Activated CD4-positive, alpha-beta memory T cell treated with anti-CD3 and anti-CD28 coated beads for 36 hours (primary cell): ENCODE measurements at regions of chr13 and their contacts with region 1.

Region 1: DNA sequence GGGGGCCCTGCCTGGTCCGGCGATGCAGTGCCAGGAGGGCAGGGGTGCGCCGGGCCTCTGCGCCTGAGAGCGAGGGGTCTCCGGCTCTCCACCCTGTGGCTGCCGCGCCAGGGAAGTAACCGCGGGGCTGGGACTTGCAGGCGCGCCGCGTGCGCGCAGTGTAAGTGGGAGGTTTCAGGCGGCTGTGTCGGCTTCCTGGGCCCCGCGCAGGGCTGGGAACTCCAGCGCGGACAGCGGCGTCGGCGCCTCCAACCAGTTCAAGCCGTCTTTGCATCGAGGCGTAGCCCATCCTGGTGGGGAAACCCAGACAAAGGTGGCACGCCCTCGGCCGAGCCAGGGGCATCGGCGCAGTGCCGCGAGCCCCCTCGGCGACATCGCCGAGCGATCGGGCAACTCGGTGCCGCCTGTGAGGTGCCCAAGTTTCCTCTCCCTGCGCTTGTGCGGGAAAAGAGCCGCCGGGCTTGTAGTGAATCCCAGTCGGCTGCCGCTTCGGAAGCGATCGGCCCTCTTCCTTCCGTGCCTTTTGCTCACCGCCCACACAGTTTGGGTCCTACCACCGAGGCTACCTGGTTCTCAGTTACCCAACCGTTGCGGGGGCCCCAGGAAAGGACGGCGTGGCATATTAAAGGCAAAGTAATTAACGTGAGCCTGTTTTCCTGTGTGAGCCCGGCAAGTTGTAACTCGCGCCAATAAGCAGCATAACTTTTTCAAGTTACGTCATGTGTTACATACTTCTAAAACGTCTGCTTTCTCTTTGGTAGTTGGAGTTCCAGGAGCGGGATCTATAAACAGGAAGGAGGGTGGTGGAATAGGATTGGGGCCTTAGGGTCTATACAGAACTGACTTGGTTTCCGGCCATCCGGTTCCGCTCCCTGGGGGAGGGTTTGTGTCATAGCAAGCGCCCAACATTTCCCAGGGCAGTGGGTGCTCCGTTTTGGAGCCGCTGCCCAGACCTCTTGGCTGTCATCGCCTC is 1.2 kb downstream of the LRCH1 start:
- DNase-seq: peak; percentile 82
- H3K4me3 Mint-ChIP-seq: peak overlapping the region; percentile 90
- H3K27ac Mint-ChIP-seq: peak overlapping the region; percentile 87
- H3K4me1 Mint-ChIP-seq: peaks cover 39% of the 10 kb centered on the region
- H3K27me3 Mint-ChIP-seq: no peaks in the 10 kb centered on the region

Region 2: DNA sequence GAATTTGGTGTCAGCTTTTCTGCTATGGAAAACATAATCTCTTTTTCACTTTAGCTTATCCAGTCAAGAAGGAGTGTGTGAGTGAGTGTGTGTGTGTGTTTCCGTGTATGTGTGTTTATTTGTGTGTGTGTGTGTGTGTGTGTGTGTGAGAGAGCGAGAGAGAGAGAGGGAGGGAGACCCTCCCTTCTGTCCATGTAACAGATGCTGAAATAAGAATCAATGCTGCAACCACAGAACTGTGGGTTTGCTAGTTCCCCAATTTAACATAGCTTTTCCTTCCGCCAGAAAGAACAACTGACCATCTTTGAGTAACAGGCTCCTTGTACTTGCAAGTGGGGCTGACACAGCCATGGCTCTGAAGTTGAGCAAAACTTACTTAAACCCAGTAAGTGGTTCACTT is 377.4 kb before region 1 on chr13:
- CTCF ChIA-PET with region 1: no interaction called
- POLR2A ChIA-PET with region 1: no interaction called
- intact Hi-C with region 1: loop called (anchors 5 kb)
- DNase-seq: no peak
- H3K4me3 Mint-ChIP-seq: peak overlapping the region; percentile 97
- H3K27ac Mint-ChIP-seq: peak overlapping the region; percentile 96
- H3K4me1 Mint-ChIP-seq: peaks cover 66% of the 10 kb centered on the region
- H3K27me3 Mint-ChIP-seq: no peaks in the 10 kb centered on the region

Region 3: GRCh38 chr13:46535829-46536228 is 18.3 kb before region 1 on chr13:
- CTCF ChIA-PET with region 1: interaction called, 21 read pairs
- POLR2A ChIA-PET with region 1: no interaction called
- intact Hi-C with region 1: no loop called
- DNase-seq: no peak
- H3K4me3 Mint-ChIP-seq: no peak overlapping the region
- H3K27ac Mint-ChIP-seq: no peak overlapping the region
- H3K4me1 Mint-ChIP-seq: peaks cover 1% of the 10 kb centered on the region
- H3K27me3 Mint-ChIP-seq: peaks cover 2% of the 10 kb centered on the region

Region 4: GRCh38 chr13:46577696-46578589 is 23.8 kb after region 1 on chr13:
- CTCF ChIA-PET with region 1: interaction called, 13 read pairs
- POLR2A ChIA-PET with region 1: interaction called, 3 read pairs
- intact Hi-C with region 1: loop called (anchors 1 kb)
- DNase-seq: no peak
- H3K4me3 Mint-ChIP-seq: no peak overlapping the region
- H3K27ac Mint-ChIP-seq: peak overlapping the region; percentile 35
- H3K4me1 Mint-ChIP-seq: peaks cover 62% of the 10 kb centered on the region
- H3K27me3 Mint-ChIP-seq: no peaks in the 10 kb centered on the region

Region 5: DNA sequence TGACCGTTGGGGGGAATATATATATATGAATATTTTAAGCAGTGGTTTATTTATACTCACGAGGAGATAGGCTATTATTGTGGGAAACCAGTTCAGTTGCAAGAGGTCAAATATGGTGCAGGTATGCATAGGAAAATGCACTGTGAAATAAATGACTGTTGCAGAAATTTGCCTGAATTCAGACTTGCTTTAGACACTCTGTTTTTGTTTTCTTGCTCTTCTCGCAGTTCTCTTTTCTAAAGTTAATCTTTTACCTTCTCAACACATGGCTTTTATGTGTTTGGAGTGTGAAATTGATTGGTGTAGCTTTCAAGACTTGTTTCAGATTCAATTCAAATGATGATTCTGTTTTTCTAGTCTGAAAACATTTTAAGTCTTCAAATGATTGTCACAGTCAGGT is 108.5 kb after region 1 on chr13:
- CTCF ChIA-PET with region 1: interaction called, 14 read pairs
- POLR2A ChIA-PET with region 1: no interaction called
- intact Hi-C with region 1: no loop called
- DNase-seq: no peak
- H3K4me3 Mint-ChIP-seq: no peak overlapping the region
- H3K27ac Mint-ChIP-seq: no peak overlapping the region
- H3K4me1 Mint-ChIP-seq: peaks cover 32% of the 10 kb centered on the region
- H3K27me3 Mint-ChIP-seq: no peaks in the 10 kb centered on the region

Region 6: GRCh38 chr13:46687810-46688209 is 133.6 kb after region 1 on chr13:
- CTCF ChIA-PET with region 1: interaction called, 13 read pairs
- POLR2A ChIA-PET with region 1: no interaction called
- intact Hi-C with region 1: no loop called
- DNase-seq: peak; percentile 19
- H3K4me3 Mint-ChIP-seq: no peak overlapping the region
- H3K27ac Mint-ChIP-seq: no peak overlapping the region
- H3K4me1 Mint-ChIP-seq: peaks cover 16% of the 10 kb centered on the region
- H3K27me3 Mint-ChIP-seq: no peaks in the 10 kb centered on the region

Region 7: DNA sequence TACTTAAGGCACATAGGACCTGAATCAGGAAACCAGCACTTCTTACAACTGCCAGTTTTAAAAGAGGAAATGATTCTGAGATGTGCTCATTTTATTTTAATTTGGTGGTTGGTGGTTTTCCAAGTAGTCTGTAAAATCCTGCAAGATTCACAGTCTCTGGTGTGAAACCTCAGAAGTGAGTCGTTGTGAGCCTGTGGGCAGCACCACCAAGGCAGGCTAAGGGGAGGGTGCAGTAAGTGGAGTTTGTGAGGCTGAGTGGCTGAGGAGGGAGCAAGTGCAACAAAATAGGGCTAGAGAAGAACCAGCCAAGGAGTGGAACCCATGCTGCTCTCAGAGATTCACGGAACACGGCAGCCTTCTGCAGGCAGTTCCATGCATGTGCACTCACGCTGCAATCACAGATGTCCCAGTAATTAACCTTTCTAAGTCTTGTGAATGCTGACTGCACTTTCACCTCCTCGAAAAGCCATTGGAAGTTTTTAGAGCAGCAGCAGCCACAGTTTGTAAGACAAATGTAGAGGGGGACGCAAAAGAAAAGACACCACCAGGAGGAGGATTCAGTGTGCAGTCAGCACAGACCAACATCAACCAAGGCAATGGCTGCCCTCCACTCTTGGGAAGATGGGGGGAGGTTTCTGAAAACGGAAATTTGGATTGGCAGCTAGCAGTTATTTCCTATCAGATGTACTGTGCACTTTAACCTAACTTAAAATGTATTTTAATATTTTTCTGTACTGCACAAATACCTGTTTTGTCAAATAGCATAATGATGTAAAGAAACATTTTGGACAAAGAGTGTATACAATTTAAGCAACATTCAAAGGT is 197.9 kb after region 1 on chr13:
- CTCF ChIA-PET with region 1: interaction called, 14 read pairs
- POLR2A ChIA-PET with region 1: no interaction called
- intact Hi-C with region 1: no loop called
- DNase-seq: peak; percentile 74
- H3K4me3 Mint-ChIP-seq: peak overlapping the region; percentile 4
- H3K27ac Mint-ChIP-seq: no peak overlapping the region
- H3K4me1 Mint-ChIP-seq: peaks cover 16% of the 10 kb centered on the region
- H3K27me3 Mint-ChIP-seq: no peaks in the 10 kb centered on the region